PC-3 (cell line): ENCODE measurements at regions of chr3 and their contacts with region 1.

Region 1: GRCh38 chr3:169980055-169980454 is 13.4 kb downstream of the SEC62 start:
- DNase-seq: no peak
- ATAC-seq: no peak
- H3K4me3 ChIP-seq: no peak overlapping the region
- H3K27ac ChIP-seq: no peak overlapping the region
- H3K4me1 ChIP-seq: no peaks in the 10 kb centered on the region
- H3K27me3 ChIP-seq: no peaks in the 10 kb centered on the region
- CTCF ChIP-seq: no peak

Region 2: GRCh38 chr3:169334991-169335390 is 645.1 kb before region 1 on chr3:
- CTCF ChIA-PET with region 1: no interaction called
- POLR2A ChIA-PET with region 1: no interaction called
- intact Hi-C with region 1: no loop called
- DNase-seq: no peak
- ATAC-seq: no peak
- H3K4me3 ChIP-seq: no peak overlapping the region
- H3K27ac ChIP-seq: no peak overlapping the region
- H3K4me1 ChIP-seq: peaks cover 37% of the 10 kb centered on the region
- H3K27me3 ChIP-seq: no peaks in the 10 kb centered on the region
- CTCF ChIP-seq: no peak

Region 3: GRCh38 chr3:169790687-169791429 is 189.2 kb before region 1 on chr3:
- CTCF ChIA-PET with region 1: no interaction called
- POLR2A ChIA-PET with region 1: no interaction called
- intact Hi-C with region 1: loop called (anchors 10 kb)
- DNase-seq: peak; percentile 44
- ATAC-seq: peak; percentile 24; the same call in 1 of the 2 replicates
- H3K4me3 ChIP-seq: no peak overlapping the region
- H3K27ac ChIP-seq: no peak overlapping the region
- H3K4me1 ChIP-seq: no peaks in the 10 kb centered on the region
- H3K27me3 ChIP-seq: no peaks in the 10 kb centered on the region
- CTCF ChIP-seq: no peak

Region 4: GRCh38 chr3:170089862-170090600 is 110.0 kb after region 1 on chr3:
- CTCF ChIA-PET with region 1: no interaction called
- POLR2A ChIA-PET with region 1: no interaction called
- intact Hi-C with region 1: loop called (anchors 10 kb)
- DNase-seq: no peak
- ATAC-seq: no peak
- H3K4me3 ChIP-seq: no peak overlapping the region
- H3K27ac ChIP-seq: no peak overlapping the region
- H3K4me1 ChIP-seq: no peaks in the 10 kb centered on the region
- H3K27me3 ChIP-seq: no peaks in the 10 kb centered on the region
- CTCF ChIP-seq: no peak